RWPE1 (cell line): ENCODE measurements at regions of chr9 and their contacts with region 1.

Region 1: DNA sequence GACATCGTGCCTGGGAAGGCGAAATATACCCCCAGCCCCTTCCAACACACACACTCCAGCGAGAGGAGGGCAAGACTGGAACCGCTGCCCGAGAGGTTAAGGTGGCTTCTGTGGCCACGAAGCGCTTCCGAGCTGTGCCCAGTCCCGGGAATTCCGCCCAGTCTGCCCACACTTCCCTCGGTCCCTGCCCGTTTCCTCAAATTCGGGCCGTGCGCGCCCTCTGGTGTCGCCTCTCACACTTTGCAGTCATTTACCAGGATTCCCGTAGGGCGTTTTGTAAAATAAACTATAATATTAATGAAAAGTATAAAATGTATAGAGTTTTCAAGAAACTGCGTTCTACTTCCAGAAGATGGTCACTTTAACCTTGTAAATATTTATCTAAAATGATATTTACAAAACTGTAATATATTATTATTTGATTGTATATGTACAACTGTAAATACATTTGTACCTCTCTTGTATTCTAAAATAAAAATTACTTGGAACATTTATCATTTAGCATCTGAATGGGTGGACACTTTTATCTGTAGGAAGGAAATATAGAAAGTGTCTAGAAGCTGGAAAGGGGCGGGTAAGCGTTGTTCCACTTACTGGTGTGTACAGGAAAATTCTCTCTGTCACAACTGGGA is 11.0 kb upstream of the EXOSC2 start:
- DNase-seq: peak; percentile 96
- H3K27ac ChIP-seq: peak overlapping the region; percentile 64
- CTCF ChIP-seq: peak; percentile 96

Region 2: GRCh38 chr9:130425741-130426468 is 256.7 kb before region 1 on chr9:
- CTCF ChIA-PET with region 1: interaction called, 11 read pairs
- POLR2A ChIA-PET with region 1: no interaction called
- DNase-seq: no peak
- H3K27ac ChIP-seq: peak overlapping the region; percentile 86
- CTCF ChIP-seq: no peak

Region 3: DNA sequence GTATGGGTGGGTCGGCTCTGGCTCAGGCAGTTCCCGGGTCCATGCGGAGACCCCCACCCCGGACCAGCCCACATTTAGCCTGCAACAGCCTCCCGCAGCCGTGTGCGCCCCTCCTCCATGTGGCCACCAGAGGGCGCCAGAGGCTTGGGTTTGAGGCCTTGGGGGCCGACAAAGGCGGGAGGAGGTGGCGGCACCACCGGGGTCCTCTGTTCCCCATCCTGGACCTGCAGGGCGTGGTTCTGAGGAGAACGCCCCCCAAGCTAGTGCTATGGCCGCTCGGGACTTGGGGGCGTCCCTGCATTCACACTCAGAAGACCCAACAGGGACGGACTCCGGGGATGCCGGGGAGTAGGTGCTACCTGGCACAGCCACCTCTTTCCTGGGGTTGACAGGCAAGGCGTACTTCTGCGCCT is 221.4 kb before region 1 on chr9:
- CTCF ChIA-PET with region 1: interaction called, 89 read pairs
- POLR2A ChIA-PET with region 1: no interaction called
- DNase-seq: peak; percentile 78
- H3K27ac ChIP-seq: peak overlapping the region; percentile 37
- CTCF ChIP-seq: peak; percentile 97

Region 4: DNA sequence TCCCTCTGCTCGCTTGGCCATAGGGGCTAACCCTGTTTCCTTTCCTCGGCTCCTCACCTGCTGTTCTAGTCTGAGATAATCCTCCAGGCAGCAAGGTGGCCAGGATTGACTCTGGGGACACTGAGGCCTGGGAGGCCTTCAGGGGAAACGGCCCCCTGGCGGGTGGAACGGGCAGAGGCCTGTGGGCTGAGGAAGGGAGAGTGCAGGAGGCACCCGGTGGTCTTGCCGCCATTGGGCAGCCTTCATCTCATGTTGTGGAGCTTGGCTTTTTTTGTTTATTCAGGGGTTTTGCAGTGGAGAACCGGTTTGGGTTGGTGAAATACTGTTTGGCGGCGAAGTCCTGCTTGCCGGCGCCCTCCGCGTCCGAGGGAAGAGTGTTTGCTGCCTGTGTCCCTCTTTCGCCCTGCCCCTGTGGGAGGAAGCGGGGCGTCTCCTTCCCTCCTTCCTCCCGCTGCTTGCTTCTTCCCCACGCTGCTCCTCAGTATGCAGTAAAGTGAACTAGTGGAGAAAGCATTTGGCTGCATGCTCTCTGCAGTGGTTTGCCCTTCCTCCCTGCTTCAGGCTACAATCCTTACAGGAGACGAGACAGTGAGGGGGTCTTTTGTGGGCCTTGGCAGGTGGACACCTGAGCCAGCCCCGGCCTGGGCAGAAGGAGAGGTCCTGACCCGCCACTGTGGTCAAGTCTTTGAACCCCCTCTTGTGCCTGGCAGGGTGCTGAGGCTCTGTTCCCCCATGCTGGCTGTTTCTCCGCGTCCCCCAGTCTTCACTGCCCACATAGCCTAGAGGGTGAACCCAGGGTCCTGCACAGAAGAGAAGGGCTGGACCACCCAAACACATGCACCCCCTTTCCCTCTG is 49.0 kb before region 1 on chr9:
- CTCF ChIA-PET with region 1: interaction called, 12 read pairs
- POLR2A ChIA-PET with region 1: no interaction called
- DNase-seq: no peak
- H3K27ac ChIP-seq: no peak overlapping the region
- CTCF ChIP-seq: no peak

Region 5: GRCh38 chr9:130663258-130663976 is 19.2 kb before region 1 on chr9:
- CTCF ChIA-PET with region 1: interaction called, 13 read pairs
- POLR2A ChIA-PET with region 1: no interaction called
- DNase-seq: no peak
- H3K27ac ChIP-seq: no peak overlapping the region
- CTCF ChIP-seq: no peak